Ascending aorta (tissue), 2 donors: ENCODE measurements at regions of chr1 and their contacts with region 1.

Region 1: DNA sequence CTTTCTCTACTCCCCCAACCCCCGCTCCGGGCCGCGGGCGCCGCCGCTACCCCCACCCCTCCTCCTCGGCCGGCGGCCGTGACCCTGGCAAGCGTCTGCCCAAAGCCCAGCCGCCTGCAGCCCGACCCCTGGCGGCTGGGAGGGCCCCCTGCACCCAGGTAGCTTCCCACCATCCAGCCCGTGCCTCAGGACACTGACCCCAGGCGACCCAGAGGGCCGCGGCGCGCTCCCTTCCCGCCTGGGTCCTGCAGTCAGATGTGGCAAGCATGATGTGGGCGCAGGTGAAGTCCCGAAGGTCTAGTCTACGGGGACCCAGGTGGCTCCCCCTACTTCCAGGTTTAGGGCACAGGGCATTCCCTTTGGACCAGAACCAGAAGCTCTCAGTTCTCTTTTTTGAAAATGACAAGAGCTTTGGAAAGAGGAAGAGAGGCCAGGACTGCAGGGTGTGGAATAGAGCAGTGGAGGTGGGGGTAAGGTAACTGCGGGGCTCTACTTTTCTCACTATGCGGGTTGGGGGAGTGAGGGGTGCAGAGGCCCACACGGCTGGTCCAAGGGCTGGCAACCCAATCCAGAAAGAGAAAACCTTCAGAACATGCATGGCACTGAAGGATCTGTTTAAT is at the start of gene DENND4B:
- DNase-seq: peak; percentile 21 to 91
- H3K4me3 ChIP-seq: peak within 1 kb of the TSS; percentile 93 to 99
- H3K27ac ChIP-seq: peak within 1 kb of the TSS; percentile 89 to 98
- H3K4me1 ChIP-seq: peaks cover 4 to 9% of the 10 kb centered on the region in 2 donors
- H3K27me3 ChIP-seq: no peaks in the 10 kb centered on the region
- CTCF ChIP-seq: peak; percentile 93 to 99 (median 97)
- total RNA-seq, gene DENND4B: 80.0 TPM

Region 2: GRCh38 chr1:153803470-153804056 is 143.2 kb before region 1 on chr1:
- intact Hi-C with region 1: loop called (anchors 5 kb)
- DNase-seq: no peak
- H3K4me3 ChIP-seq: no peak overlapping the region
- H3K27ac ChIP-seq: peak overlapping the region; percentile 16 to 37
- H3K4me1 ChIP-seq: no peaks in the 10 kb centered on the region
- H3K27me3 ChIP-seq: no peaks in the 10 kb centered on the region
- CTCF ChIP-seq: no peak

Region 3: DNA sequence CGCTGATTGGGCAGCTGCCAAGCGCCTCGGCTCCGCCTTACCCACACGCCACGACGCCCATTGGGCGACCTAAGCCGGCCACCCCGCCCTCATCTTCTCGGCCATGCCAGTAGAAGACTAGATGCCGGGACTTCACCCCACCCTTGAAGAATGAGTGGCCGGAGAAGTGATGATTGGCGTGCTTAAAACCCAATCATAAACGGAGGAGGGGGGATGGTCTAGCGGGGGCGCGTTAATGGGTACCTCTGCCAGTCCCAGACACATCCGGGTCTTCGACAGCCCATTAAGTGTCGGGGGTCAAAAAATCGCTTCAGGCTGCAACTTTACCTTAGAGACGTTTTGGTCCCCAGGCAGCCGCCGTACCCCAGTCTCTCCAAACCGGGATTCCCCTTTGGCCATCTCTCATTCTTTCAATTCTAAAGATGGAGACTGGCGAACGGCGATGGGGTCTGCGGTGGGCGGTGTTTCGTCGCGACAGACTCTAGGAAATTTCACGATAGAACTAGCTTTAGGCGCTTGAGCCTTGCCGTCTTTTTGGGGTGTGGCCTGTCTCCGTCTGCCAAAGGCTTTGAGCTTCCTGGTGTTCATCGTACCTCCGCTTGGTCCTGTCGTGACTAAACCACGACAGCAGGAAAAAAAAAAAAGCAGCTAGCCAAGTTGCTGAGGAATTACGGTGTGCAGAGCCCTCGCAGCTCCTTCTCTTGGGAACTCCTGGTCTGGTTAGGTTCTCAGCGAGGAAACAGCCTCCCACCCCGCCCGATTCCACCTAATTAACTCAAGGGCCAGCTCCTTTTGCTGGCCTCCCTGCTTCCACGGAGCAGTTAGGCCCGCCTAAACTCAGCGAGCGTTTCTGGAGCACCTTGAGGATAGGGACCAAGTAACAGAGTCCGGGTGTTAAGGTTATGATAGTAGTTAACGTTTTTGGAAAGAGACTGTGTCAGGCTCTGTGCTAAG is 23.5 kb before region 1 on chr1 and contains the start of gene GATAD2B:
- intact Hi-C with region 1: loop called (anchors 1 kb)
- DNase-seq: peak; percentile 99 to 100
- H3K4me3 ChIP-seq: peak within 1 kb of the TSS; percentile 72 to 86
- H3K27ac ChIP-seq: peak within 1 kb of the TSS; percentile 88 to 97
- H3K4me1 ChIP-seq: peaks cover 6 to 24% of the 10 kb centered on the region in 2 donors
- H3K27me3 ChIP-seq: no peaks in the 10 kb centered on the region
- CTCF ChIP-seq: no peak
- total RNA-seq, gene GATAD2B: 9.5 TPM

Region 4: DNA sequence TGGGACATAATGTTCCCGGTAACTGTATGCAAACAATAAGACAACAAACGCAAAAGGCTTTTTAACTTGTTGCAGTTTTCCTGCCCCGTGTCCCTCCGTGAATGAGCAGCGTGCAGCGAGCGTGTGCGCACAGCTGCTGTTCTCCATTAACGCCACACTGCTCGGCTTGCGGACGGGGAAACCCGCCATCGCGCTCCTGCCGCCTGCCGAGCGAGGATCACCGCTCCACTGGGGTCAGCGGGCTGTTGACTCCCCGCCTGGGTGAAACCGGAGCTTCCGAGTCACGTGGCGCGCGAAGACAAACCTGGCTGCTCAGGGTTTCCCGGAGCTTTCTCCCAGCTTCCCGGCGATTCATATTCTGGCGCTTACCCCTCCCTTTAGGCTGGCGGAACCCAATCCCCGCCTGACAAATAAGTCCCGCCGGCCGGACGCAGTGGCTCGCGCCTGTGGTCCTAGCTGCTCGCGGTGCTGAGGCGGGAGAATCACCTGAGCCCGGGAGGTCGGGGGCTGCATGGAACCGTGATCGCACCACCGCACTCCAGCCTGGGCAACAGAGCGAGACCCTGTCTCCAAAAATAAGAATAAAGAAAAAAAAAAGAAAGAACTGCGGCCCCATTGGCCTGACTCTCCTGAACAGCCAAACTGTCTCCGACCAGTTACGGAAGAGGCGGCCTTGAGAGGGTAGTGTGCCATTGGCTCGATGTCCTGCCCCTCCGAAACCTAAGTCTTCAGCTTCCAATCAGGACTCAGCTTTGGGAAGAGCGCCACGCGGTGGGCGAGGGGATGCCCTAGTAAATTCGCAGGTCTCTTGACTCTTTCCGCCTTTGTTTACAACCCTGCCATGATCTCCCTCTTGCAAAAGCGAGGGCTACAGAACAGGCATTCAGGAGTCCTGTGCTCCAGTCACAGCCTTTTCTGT is 20.6 kb after region 1 on chr1 and contains the start of gene CREB3L4:
- intact Hi-C with region 1: loop called (anchors 1 kb)
- DNase-seq: peak; percentile 73 to 96
- H3K4me3 ChIP-seq: peak within 1 kb of the TSS; percentile 62 to 69
- H3K27ac ChIP-seq: peak within 1 kb of the TSS; percentile 80 to 85
- H3K4me1 ChIP-seq: peaks cover 9 to 20% of the 10 kb centered on the region in 2 donors
- H3K27me3 ChIP-seq: no peaks in the 10 kb centered on the region
- CTCF ChIP-seq: peak; percentile 6 to 43 (median 43)
- total RNA-seq, gene CREB3L4: 6.3 TPM

Region 5: DNA sequence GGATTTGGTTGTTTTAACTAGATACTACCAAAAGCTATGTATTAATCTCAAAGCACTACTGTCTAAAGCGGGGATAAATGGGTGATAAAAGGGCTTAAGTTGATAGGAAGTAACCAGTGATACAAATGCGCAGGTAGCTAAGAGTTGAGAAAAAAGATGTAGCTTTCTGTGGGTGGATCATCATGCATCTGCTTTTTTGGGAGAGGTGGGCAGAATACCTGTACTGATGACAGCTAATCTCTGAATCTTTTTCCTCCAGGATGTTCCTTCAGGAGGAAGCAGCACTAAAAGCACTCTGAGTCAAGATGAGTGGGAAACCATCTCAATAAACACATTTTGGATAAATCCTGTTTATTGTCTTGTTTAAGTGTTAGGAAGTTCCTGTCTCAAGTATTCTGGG is 45.1 kb after region 1 on chr1:
- intact Hi-C with region 1: no loop called
- DNase-seq: no peak
- H3K4me3 ChIP-seq: peak overlapping the region; percentile 64 to 73
- H3K27ac ChIP-seq: peak overlapping the region; percentile 86 to 88
- H3K4me1 ChIP-seq: peaks cover 7 to 25% of the 10 kb centered on the region in 2 donors
- H3K27me3 ChIP-seq: no peaks in the 10 kb centered on the region
- CTCF ChIP-seq: no peak